Activated B cell treated with CpG ODN at 0.5 μM for 24 hours (primary cell): ENCODE measurements at regions of chr15 and their contacts with region 1.

Region 1: GRCh38 chr15:48861813-48862431 is 16.0 kb upstream of the EID1 start:
- DNase-seq: no peak
- ATAC-seq: peak; percentile 57
- H3K4me3 Mint-ChIP-seq: no peak overlapping the region
- H3K27ac Mint-ChIP-seq: no peak overlapping the region
- H3K4me1 Mint-ChIP-seq: no peaks in the 10 kb centered on the region
- H3K27me3 Mint-ChIP-seq: peaks cover 15% of the 10 kb centered on the region
- CTCF ChIP-seq: peak; percentile 47

Region 2: GRCh38 chr15:48845123-48845522 is 16.8 kb before region 1 on chr15:
- CTCF ChIA-PET with region 1: no interaction called
- POLR2A ChIA-PET with region 1: no interaction called
- intact Hi-C with region 1: no loop called
- DNase-seq: no peak
- ATAC-seq: no peak
- H3K4me3 Mint-ChIP-seq: no peak overlapping the region
- H3K27ac Mint-ChIP-seq: no peak overlapping the region
- H3K4me1 Mint-ChIP-seq: no peaks in the 10 kb centered on the region
- H3K27me3 Mint-ChIP-seq: peaks cover 10% of the 10 kb centered on the region
- CTCF ChIP-seq: no peak

Region 3: DNA sequence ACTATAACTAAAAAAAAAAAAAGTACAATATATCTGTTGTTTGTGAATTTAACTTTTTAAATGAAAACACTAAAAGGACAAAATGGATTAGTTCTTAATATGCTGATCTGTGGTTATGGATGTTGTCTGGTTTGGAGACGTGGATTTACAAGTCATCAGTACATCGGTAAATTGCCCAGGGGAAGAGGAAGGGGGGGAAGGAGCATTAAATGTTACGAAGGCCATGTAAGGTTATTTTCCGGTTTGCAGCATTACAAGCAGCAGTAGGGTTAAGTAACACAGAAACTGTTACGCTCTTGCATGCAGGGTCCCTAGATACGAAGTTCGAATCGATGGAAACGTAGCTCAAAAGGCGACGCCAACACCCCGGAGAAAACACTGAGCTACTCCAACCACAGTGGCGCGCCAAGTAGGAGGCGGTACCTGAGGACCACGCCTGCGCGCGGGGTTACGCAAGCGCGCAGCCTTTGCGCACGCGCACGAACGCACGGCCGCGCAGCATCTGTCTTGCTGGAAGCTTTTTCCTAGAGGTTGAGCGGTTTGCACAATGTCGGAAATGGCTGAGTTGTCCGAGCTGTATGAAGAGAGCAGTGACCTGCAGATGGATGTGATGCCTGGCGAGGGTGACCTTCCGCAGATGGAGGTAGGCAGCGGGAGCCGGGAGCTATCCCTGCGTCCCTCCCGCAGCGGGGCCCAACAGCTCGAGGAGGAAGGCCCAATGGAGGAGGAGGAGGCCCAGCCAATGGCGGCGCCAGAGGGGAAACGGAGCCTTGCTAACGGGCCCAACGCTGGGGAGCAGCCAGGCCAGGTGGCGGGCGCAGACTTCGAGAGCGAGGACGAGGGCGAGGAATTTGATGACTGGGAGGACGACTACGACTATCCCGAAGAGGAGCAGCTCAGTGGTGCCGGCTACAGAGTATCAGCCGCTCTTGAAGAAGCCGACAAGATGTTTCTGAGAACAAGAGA is 16.0 kb after region 1 on chr15 and contains the start of gene EID1:
- CTCF ChIA-PET with region 1: interaction called, 10 read pairs
- POLR2A ChIA-PET with region 1: no interaction called
- intact Hi-C with region 1: no loop called
- DNase-seq: peak; percentile 90
- ATAC-seq: peak; percentile 95
- H3K4me3 Mint-ChIP-seq: peak within 1 kb of the TSS; percentile 99
- H3K27ac Mint-ChIP-seq: peak within 1 kb of the TSS; percentile 97
- H3K4me1 Mint-ChIP-seq: peaks cover 27% of the 10 kb centered on the region
- H3K27me3 Mint-ChIP-seq: peaks cover 3% of the 10 kb centered on the region
- CTCF ChIP-seq: no peak
- total RNA-seq, gene EID1: 51.3 and 54.4 TPM in 2 replicates

Region 4: GRCh38 chr15:49145651-49146609 is 284.0 kb after region 1 on chr15:
- CTCF ChIA-PET with region 1: interaction called, 29 read pairs
- POLR2A ChIA-PET with region 1: no interaction called
- intact Hi-C with region 1: loop called (anchors 1 kb)
- DNase-seq: no peak
- ATAC-seq: no peak
- H3K4me3 Mint-ChIP-seq: no peak overlapping the region
- H3K27ac Mint-ChIP-seq: peak overlapping the region; percentile 3
- H3K4me1 Mint-ChIP-seq: peaks cover 40% of the 10 kb centered on the region
- H3K27me3 Mint-ChIP-seq: no peaks in the 10 kb centered on the region
- CTCF ChIP-seq: no peak

Region 5: GRCh38 chr15:50003786-50004334 is 1141.9 kb after region 1 on chr15:
- CTCF ChIA-PET with region 1: interaction called, 9 read pairs
- POLR2A ChIA-PET with region 1: no interaction called
- intact Hi-C with region 1: loop called (anchors 1 kb)
- DNase-seq: peak; percentile 20
- ATAC-seq: peak; percentile 88
- H3K4me3 Mint-ChIP-seq: no peak overlapping the region
- H3K27ac Mint-ChIP-seq: no peak overlapping the region
- H3K4me1 Mint-ChIP-seq: peaks cover 11% of the 10 kb centered on the region
- H3K27me3 Mint-ChIP-seq: no peaks in the 10 kb centered on the region
- CTCF ChIP-seq: no peak

Region 6: DNA sequence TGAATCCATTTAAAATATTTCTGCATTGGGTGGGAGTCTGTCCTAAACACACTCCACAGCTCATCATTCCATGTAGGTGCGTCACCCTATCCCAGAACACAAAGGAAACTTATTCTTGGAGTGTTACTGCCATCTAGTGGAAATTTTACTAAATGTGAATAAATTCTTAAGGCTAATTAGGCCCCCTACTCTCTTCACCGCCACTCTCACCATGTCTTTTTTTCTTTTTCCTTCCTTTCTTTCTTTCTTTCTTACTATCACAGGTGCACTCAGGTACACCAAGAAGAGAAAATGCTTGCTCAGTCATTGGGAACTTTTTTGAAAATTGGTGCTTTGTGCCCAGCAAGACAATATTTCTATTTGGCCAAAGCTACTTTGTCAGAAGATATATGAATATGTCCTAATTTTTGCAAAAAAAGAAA is 1283.5 kb after region 1 on chr15:
- CTCF ChIA-PET with region 1: interaction called, 23 read pairs
- POLR2A ChIA-PET with region 1: no interaction called
- intact Hi-C with region 1: loop called (anchors 1 kb)
- DNase-seq: no peak
- ATAC-seq: no peak
- H3K4me3 Mint-ChIP-seq: no peak overlapping the region
- H3K27ac Mint-ChIP-seq: no peak overlapping the region
- H3K4me1 Mint-ChIP-seq: peaks cover 9% of the 10 kb centered on the region
- H3K27me3 Mint-ChIP-seq: no peaks in the 10 kb centered on the region
- CTCF ChIP-seq: no peak